GM12878 (cell line): ENCODE measurements at regions of chr15 and their contacts with region 1.

Region 1: GRCh38 chr15:85485956-85486567 is 105.7 kb downstream of the AKAP13 start:
- DNase-seq: peak; percentile 59
- ATAC-seq: peak; percentile 69
- H3K4me3 ChIP-seq: no peak overlapping the region
- H3K27ac ChIP-seq: no peak overlapping the region
- H3K4me1 ChIP-seq: peaks cover 35% of the 10 kb centered on the region
- H3K27me3 ChIP-seq: no peaks in the 10 kb centered on the region
- CTCF ChIP-seq: peak; percentile 64 to 76 (median 67)
- EP300 ChIP-seq: no peak
- POLR2A ChIP-seq: no peak
- RAD21 ChIP-seq: peak; percentile 86

Region 2: DNA sequence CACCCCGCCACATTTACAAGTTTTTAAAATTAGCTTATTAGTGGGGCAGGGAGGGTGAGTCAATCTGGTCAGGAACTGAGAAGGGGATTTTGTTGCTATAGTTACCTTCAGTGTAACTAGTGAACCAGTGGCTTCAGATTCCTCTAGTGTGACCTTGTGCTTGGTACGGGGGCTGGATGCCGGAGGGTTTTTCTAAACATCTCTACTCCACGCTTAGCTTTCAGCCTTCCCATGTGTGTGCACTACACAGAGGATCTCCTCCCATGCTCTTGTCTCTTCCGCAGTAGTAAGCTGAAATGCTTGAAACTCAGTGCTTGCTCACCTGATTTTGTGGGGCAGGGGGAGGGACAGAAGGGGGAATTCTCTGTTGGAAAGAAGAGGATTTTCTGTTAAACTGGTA is 173.6 kb before region 1 on chr15:
- CTCF ChIA-PET with region 1: interaction called, 3 read pairs
- POLR2A ChIA-PET with region 1: interaction called, 5 read pairs
- RAD21 ChIA-PET with region 1: interaction called, 5 read pairs
- SMC1A ChIA-PET with region 1: interaction called, 12 read pairs
- in situ Hi-C with region 1: no loop called
- intact Hi-C with region 1: no loop called
- DNase-seq: peak; percentile 77
- ATAC-seq: peak; percentile 98
- H3K4me3 ChIP-seq: peak overlapping the region; percentile 39
- H3K27ac ChIP-seq: peak overlapping the region; percentile 84
- H3K4me1 ChIP-seq: peaks cover 36% of the 10 kb centered on the region
- H3K27me3 ChIP-seq: no peaks in the 10 kb centered on the region
- CTCF ChIP-seq: no peak
- EP300 ChIP-seq: peak in 1 of 2 experiments; percentile 41; a peak in 1 of 4 replicates
- POLR2A ChIP-seq: peak; percentile 38; the same call in 1 of the 2 replicates
- RAD21 ChIP-seq: no peak

Region 3: GRCh38 chr15:85475317-85475701 is 10.8 kb before region 1 on chr15:
- CTCF ChIA-PET with region 1: interaction called, 44 read pairs
- POLR2A ChIA-PET with region 1: interaction called, 4 read pairs
- RAD21 ChIA-PET with region 1: interaction called, 27 read pairs
- SMC1A ChIA-PET with region 1: interaction called, 33 read pairs
- in situ Hi-C with region 1: no loop called
- intact Hi-C with region 1: no loop called
- DNase-seq: peak; percentile 85
- ATAC-seq: peak; percentile 89
- H3K4me3 ChIP-seq: peak overlapping the region; percentile 39; the same call in 1 of the 2 replicates
- H3K27ac ChIP-seq: peak overlapping the region; percentile 90
- H3K4me1 ChIP-seq: peaks cover 42% of the 10 kb centered on the region
- H3K27me3 ChIP-seq: no peaks in the 10 kb centered on the region
- CTCF ChIP-seq: no peak
- EP300 ChIP-seq: peak; percentile 26 to 44; a peak in 1 of 4 replicates
- POLR2A ChIP-seq: no peak
- RAD21 ChIP-seq: 0 out of 2 replicates have a peak, but pooled peaks have one; percentile 8

Region 4: DNA sequence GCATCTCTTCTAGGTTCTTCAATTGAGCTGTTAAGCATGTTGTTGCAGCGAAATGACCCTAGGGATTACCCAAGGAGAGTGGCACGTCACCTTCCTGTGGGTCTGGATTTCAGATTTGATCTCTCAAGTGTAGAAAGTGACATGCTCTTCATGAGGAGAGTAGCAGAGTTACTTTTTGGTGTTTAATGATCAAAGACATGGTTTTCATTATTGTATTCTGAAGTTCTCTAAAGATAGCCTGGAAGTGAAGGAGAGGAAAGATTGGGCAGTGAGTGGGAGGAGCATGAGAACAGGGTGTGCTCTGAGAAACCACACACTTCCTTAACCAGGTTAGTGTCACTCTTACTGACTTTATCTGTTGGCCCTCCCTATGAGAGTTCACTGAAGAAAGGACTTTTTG is 48.0 kb after region 1 on chr15:
- CTCF ChIA-PET with region 1: interaction called, 11 read pairs
- POLR2A ChIA-PET with region 1: no interaction called
- RAD21 ChIA-PET with region 1: interaction called, 4 read pairs
- SMC1A ChIA-PET with region 1: interaction called, 13 read pairs
- in situ Hi-C with region 1: no loop called
- intact Hi-C with region 1: no loop called
- DNase-seq: no peak
- ATAC-seq: peak; percentile 90
- H3K4me3 ChIP-seq: no peak overlapping the region
- H3K27ac ChIP-seq: no peak overlapping the region
- H3K4me1 ChIP-seq: peaks cover 23% of the 10 kb centered on the region
- H3K27me3 ChIP-seq: no peaks in the 10 kb centered on the region
- CTCF ChIP-seq: no peak
- EP300 ChIP-seq: no peak
- POLR2A ChIP-seq: no peak
- RAD21 ChIP-seq: no peak

Region 5: GRCh38 chr15:85570336-85570735 is 84.3 kb after region 1 on chr15:
- CTCF ChIA-PET with region 1: no interaction called
- POLR2A ChIA-PET with region 1: no interaction called
- RAD21 ChIA-PET with region 1: no interaction called
- SMC1A ChIA-PET with region 1: no interaction called
- in situ Hi-C with region 1: no loop called
- intact Hi-C with region 1: no loop called
- DNase-seq: no peak
- ATAC-seq: no peak
- H3K4me3 ChIP-seq: no peak overlapping the region
- H3K27ac ChIP-seq: no peak overlapping the region
- H3K4me1 ChIP-seq: no peaks in the 10 kb centered on the region
- H3K27me3 ChIP-seq: no peaks in the 10 kb centered on the region
- CTCF ChIP-seq: no peak
- EP300 ChIP-seq: no peak
- POLR2A ChIP-seq: no peak
- RAD21 ChIP-seq: no peak

Region 6: DNA sequence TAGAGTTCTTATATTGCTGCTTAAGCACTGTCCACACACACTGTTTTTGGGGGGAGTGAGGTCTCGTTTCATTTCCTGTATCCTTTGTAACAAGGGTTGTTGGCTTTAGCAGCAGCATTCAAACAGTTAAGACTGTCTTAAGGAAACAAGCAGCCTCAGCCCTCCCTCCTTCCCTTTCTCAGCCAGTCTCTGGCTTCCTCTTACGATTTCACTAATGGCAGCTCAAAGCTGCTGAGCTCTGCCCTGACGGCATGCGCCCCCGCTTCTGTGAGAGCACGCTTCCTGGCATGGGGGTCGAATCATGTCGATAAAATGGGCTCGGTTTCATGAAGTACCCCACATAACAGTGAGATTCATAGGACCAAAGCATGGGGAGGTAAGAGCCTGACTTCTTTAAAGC is 203.7 kb after region 1 on chr15:
- CTCF ChIA-PET with region 1: interaction called, 3 read pairs
- POLR2A ChIA-PET with region 1: no interaction called
- RAD21 ChIA-PET with region 1: interaction called, 23 read pairs
- SMC1A ChIA-PET with region 1: interaction called, 4 read pairs
- in situ Hi-C with region 1: no loop called
- intact Hi-C with region 1: loop called (anchors 10 kb)
- DNase-seq: peak; percentile 84
- ATAC-seq: peak; percentile 55
- H3K4me3 ChIP-seq: peak overlapping the region; percentile 62
- H3K27ac ChIP-seq: peak overlapping the region; percentile 97
- H3K4me1 ChIP-seq: peaks cover 67% of the 10 kb centered on the region
- H3K27me3 ChIP-seq: no peaks in the 10 kb centered on the region
- CTCF ChIP-seq: no peak
- EP300 ChIP-seq: no peak; a peak in 1 of 4 replicates
- POLR2A ChIP-seq: peak; percentile 87
- RAD21 ChIP-seq: no peak

Region 7: GRCh38 chr15:85840065-85840801 is 354.2 kb after region 1 on chr15:
- CTCF ChIA-PET with region 1: interaction called, 4 read pairs
- POLR2A ChIA-PET with region 1: no interaction called
- RAD21 ChIA-PET with region 1: interaction called, 3 read pairs
- SMC1A ChIA-PET with region 1: interaction called, 3 read pairs
- in situ Hi-C with region 1: no loop called
- intact Hi-C with region 1: loop called (anchors 2 kb)
- DNase-seq: peak; percentile 23
- ATAC-seq: peak; percentile 99
- H3K4me3 ChIP-seq: no peak overlapping the region; the same call in 1 of the 2 replicates
- H3K27ac ChIP-seq: no peak overlapping the region
- H3K4me1 ChIP-seq: no peaks in the 10 kb centered on the region; the same call in 1 of the 2 replicates
- H3K27me3 ChIP-seq: no peaks in the 10 kb centered on the region; a peak in 1 of 4 replicates
- CTCF ChIP-seq: peak; percentile 84 to 94 (median 86)
- EP300 ChIP-seq: no peak
- POLR2A ChIP-seq: no peak
- RAD21 ChIP-seq: peak; percentile 76